Dendritic cell treated with granulocyte-macrophage colony-stimulating factor and Interleukin-4, amounts not matched to agents 40 ng/mL and 50 ng/mL, for 4 days (primary cell): ENCODE measurements at regions of chr2 and their contacts with region 1.

Region 1: GRCh38 chr2:224357098-224357901 is 44.6 kb downstream of the FAM124B start:
- H3K4me3 Mint-ChIP-seq: no peak overlapping the region
- H3K27ac Mint-ChIP-seq: no peak overlapping the region
- H3K4me1 Mint-ChIP-seq: no peaks in the 10 kb centered on the region
- H3K27me3 Mint-ChIP-seq: no peaks in the 10 kb centered on the region

Region 2: GRCh38 chr2:224449212-224450147 is 92.2 kb after region 1 on chr2:
- intact Hi-C with region 1: loop called (anchors 1 kb)
- H3K4me3 Mint-ChIP-seq: no peak overlapping the region
- H3K27ac Mint-ChIP-seq: no peak overlapping the region
- H3K4me1 Mint-ChIP-seq: no peaks in the 10 kb centered on the region
- H3K27me3 Mint-ChIP-seq: peaks cover under 1% of the 10 kb centered on the region

Region 3: DNA sequence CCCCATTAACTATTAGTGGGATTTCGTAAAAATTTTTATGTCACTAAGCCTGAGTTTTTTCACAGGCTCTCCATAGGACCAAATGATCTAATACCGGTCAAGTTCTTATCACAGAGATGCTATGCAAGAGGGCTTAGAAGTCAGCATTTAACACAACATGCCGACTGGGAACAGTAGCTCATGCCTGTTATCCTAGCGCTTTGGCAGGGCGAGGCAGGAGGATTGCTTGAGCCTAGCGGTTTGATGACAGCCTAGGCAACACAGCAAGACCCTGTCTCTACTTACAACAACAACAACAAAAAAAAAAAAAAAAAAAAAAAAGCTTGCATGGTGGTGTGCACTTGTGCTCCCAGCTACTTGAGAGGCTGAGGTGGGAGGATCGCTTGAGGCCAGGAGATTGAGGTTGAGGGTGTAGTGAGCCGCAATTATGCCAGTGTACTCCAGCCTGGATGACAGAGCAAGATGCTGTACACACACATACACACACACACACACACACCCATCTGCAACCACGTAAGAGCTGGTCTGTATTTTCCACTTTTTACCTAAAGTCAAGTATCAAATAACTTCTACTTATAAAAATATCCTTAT is 112.2 kb after region 1 on chr2:
- intact Hi-C with region 1: no loop called
- H3K4me3 Mint-ChIP-seq: no peak overlapping the region
- H3K27ac Mint-ChIP-seq: no peak overlapping the region
- H3K4me1 Mint-ChIP-seq: no peaks in the 10 kb centered on the region
- H3K27me3 Mint-ChIP-seq: no peaks in the 10 kb centered on the region

Region 4: DNA sequence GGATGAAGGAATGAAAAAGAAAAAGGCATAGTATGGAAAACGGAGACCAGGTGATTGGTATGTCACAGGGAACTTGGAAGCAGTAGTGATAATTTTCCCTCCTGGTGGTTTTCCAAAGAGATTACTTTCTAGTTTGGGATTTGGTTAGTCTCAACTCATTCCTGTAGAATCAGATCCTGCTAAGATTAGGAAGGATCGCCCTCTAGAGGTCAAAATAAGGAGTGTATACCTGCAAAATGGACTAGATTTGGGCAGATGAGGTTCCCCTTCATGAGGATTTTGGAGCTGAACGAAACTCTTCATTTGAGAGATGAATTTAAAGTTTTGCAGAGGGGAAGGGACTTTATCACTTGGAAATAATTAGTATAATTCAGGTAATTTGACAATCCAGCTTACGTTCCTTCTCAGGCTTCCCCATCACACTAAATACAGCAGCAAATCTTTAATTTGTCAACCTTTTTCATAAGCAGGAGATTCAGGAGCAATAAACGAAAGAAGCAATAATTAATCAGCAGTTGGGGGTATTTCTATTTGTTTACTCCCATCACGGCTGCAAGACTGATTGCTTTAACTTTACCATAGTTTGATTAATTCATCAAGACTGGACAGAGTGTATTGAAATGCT is 293.6 kb after region 1 on chr2:
- intact Hi-C with region 1: loop called (anchors 1 kb)
- H3K4me3 Mint-ChIP-seq: no peak overlapping the region
- H3K27ac Mint-ChIP-seq: no peak overlapping the region
- H3K4me1 Mint-ChIP-seq: no peaks in the 10 kb centered on the region
- H3K27me3 Mint-ChIP-seq: no peaks in the 10 kb centered on the region

Region 5: DNA sequence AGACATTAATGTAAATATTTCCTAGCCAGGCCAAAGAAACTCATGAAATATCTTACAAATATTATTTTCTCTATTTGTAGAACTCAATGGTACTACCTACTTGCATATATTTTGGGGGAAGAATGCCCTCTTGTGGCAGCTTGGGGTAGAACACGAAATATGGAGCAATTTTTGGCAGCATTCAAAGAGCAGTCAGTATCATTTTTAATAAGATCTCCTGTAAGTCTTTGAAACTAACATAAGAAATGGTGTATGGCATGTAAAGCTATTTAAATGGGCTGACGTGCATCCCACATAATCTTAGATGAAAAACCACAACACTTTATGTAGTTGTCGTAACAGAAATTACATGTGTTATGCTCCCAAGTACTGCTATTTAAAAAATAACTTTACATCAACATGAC is 421.2 kb after region 1 on chr2:
- intact Hi-C with region 1: loop called (anchors 5 kb)
- H3K4me3 Mint-ChIP-seq: no peak overlapping the region
- H3K27ac Mint-ChIP-seq: no peak overlapping the region
- H3K4me1 Mint-ChIP-seq: no peaks in the 10 kb centered on the region
- H3K27me3 Mint-ChIP-seq: no peaks in the 10 kb centered on the region

Region 6: DNA sequence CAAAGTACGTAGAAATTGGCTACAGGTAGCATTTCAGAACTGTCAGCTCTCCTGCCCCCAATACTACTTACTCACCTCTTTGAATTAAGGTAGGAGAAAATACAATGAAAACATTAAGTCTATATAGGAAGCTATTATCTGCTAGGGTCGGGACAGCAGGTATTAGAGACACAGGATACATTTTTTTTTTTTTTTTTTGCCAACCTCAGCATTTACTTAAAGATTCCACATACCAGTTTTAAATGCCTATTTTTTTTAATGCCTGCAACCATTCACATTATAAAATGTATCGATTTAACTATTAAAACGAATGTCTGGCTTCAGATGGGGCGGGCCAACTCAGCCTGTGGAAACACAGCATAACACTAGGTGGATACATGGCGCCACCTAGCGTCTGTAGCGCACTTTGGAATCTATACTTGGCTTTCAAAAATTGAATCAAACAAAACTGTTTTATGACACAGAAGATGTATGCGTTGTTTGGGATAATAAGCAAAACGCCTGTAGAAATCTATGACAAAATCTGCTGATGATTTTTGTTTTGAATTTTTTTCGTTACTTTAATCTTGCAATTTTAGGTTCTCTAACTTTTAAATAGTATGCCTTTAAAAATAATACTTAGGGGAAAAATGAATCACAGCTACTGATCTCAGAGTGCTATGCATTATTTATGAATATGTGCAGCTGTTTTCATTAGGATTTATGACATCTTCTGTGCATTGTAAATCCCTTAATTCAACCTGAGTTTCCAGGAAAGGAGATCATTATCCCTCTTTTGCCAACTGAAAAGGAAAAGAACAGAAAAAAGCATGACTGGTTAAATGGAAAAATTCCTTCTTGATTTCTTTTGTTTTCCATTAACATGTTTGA is 1303.2 kb after region 1 on chr2:
- intact Hi-C with region 1: loop called (anchors 10 kb)
- H3K4me3 Mint-ChIP-seq: no peak overlapping the region
- H3K27ac Mint-ChIP-seq: no peak overlapping the region
- H3K4me1 Mint-ChIP-seq: peaks cover 4% of the 10 kb centered on the region
- H3K27me3 Mint-ChIP-seq: peaks cover 5% of the 10 kb centered on the region